Dorsolateral prefrontal cortex (tissue), 120 donors: ENCODE measurements at regions of chr7 and their contacts with region 1.

Region 1: GRCh38 chr7:138992052-138992531 is 10.9 kb upstream of the KIAA1549 start:
- DNase-seq: peak in 5 of 10 donors; percentile 25 to 60 (median 53)
- H3K4me3 ChIP-seq: no peak overlapping the region
- H3K27ac ChIP-seq: peak overlapping the region in 2 of 59 donors; percentile 23 to 46
- H3K27me3 ChIP-seq: no peaks in the 10 kb centered on the region
- CTCF ChIP-seq: no peak

Region 2: GRCh38 chr7:138919216-138919615 is 72.9 kb before region 1 on chr7:
- intact Hi-C with region 1: loop called in 1 of 2 experiments (anchors 5 kb)
- DNase-seq: peak in 1 of 10 donors; percentile 46
- H3K4me3 ChIP-seq: peak overlapping the region in 1 of 59 donors; percentile 10
- H3K27ac ChIP-seq: peak overlapping the region in 28 of 59 donors; percentile 6 to 79 (median 41)
- H3K27me3 ChIP-seq: no peaks in the 10 kb centered on the region
- CTCF ChIP-seq: no peak

Region 3: DNA sequence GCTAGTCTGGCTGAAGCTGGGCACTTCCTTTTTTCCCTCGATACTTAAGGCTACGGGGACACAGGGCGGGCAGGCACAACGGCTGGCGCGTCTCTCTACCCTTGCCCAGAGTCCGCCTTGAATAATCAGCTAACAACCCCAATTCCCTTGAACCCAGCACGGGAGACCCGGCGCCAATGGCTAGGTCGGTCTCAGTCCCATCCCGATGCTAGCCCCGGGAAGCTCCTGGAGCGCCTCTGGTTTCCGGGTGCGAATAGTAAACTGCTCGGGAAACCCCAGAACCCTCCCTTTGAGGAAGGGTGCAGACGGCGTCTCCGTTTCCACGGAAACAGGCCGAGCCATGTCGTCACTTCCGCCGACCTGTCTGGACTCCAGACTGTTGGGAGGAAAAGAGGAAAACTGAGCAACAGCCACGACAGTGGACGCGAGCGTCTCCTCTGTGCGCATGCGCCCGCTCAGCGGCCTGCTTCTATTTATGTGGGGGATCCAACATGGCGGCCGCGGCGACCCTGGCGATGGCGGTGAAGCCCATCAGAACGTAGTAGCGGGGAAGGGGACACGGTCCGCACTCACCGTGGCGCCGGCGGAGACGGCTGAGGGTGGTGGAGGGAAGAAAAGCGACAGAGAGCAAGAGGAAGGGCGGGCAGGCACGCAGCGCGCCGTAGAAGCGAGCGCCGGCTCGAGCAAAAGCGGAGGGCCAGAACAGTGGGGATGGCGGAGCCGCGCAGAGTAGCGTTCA is 238.9 kb after region 1 on chr7 and contains the start of gene UBN2:
- intact Hi-C with region 1: no loop called
- DNase-seq: peak; percentile 95 to 99 (median 98)
- H3K4me3 ChIP-seq: peak within 1 kb of the TSS; percentile 75 to 99 (median 95)
- H3K27ac ChIP-seq: peak within 1 kb of the TSS; percentile 79 to 100 (median 96)
- H3K27me3 ChIP-seq: no peaks in the 10 kb centered on the region
- CTCF ChIP-seq: peak in 22 of 56 donors; percentile 6 to 57 (median 30)
- total RNA-seq, gene UBN2: 40.4 to 73.9 (median 54.8) TPM